Activated CD4-positive, alpha-beta memory T cell treated with anti-CD3 and anti-CD28 coated beads for 36 hours (primary cell): ENCODE measurements at regions of chr17 and their contacts with region 1.

Region 1: GRCh38 chr17:49556223-49556971 is 19.3 kb upstream of the NXPH3 start:
- DNase-seq: peak; percentile 89
- H3K4me3 Mint-ChIP-seq: no peak overlapping the region
- H3K27ac Mint-ChIP-seq: no peak overlapping the region
- H3K4me1 Mint-ChIP-seq: peaks cover 5% of the 10 kb centered on the region
- H3K27me3 Mint-ChIP-seq: peaks cover 3% of the 10 kb centered on the region

Region 2: GRCh38 chr17:49407981-49408501 is 148.4 kb before region 1 on chr17:
- CTCF ChIA-PET with region 1: interaction called, 167 read pairs
- POLR2A ChIA-PET with region 1: no interaction called
- intact Hi-C with region 1: loop called (anchors 1 kb)
- DNase-seq: peak; percentile 91
- H3K4me3 Mint-ChIP-seq: no peak overlapping the region
- H3K27ac Mint-ChIP-seq: peak overlapping the region; percentile 40
- H3K4me1 Mint-ChIP-seq: peaks cover 13% of the 10 kb centered on the region
- H3K27me3 Mint-ChIP-seq: no peaks in the 10 kb centered on the region

Region 3: DNA sequence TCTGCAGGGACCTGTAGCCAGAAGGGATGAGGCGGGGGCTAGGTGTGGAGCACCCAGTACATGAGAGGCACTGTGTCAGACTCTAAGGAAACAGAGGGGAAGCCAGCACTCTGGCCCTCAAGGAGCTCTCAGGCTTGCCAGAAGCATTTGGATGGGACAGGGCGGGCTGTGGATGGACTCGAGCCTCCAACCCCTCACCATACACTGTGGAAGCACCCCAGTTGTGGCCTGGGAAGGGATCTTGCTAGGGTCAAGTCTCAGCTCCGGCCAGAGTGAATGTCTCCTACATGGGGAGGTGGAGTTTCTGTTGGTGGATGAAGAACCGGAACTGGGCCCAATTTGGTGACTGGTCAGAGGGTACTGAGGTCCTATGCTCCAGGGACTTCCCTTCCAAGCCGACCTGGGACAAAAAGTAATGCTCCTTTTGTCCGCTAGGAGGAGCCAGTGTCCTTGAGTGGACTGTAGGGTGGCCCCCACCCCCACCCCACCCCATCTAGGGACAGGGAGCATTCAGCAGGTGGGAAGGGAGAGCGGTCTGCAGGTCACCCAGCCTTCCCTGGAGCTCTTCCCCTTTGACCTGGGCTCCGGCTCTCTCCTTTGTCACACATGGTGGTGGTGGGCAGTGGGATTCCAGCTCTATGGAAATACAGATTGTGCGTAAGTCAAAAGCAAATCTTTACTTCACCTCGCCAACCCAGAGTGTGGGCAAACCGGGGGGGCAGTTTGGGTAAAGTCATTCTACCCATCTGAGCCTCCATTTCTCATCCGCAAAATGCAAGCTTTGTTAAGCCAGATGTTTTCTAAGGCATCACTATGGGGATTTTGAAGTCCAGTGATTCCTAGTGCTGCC is 121.4 kb before region 1 on chr17:
- CTCF ChIA-PET with region 1: interaction called, 118 read pairs
- POLR2A ChIA-PET with region 1: no interaction called
- intact Hi-C with region 1: loop called (anchors 1 kb)
- DNase-seq: peak; percentile 57
- H3K4me3 Mint-ChIP-seq: no peak overlapping the region
- H3K27ac Mint-ChIP-seq: no peak overlapping the region
- H3K4me1 Mint-ChIP-seq: no peaks in the 10 kb centered on the region
- H3K27me3 Mint-ChIP-seq: peaks cover 21% of the 10 kb centered on the region

Region 4: GRCh38 chr17:49567871-49568694 is 11.7 kb after region 1 on chr17:
- CTCF ChIA-PET with region 1: interaction called, 42 read pairs
- POLR2A ChIA-PET with region 1: no interaction called
- intact Hi-C with region 1: no loop called
- DNase-seq: peak; percentile 90
- H3K4me3 Mint-ChIP-seq: peak overlapping the region; percentile 67
- H3K27ac Mint-ChIP-seq: no peak overlapping the region
- H3K4me1 Mint-ChIP-seq: peaks cover 16% of the 10 kb centered on the region
- H3K27me3 Mint-ChIP-seq: peaks cover 14% of the 10 kb centered on the region

Region 5: DNA sequence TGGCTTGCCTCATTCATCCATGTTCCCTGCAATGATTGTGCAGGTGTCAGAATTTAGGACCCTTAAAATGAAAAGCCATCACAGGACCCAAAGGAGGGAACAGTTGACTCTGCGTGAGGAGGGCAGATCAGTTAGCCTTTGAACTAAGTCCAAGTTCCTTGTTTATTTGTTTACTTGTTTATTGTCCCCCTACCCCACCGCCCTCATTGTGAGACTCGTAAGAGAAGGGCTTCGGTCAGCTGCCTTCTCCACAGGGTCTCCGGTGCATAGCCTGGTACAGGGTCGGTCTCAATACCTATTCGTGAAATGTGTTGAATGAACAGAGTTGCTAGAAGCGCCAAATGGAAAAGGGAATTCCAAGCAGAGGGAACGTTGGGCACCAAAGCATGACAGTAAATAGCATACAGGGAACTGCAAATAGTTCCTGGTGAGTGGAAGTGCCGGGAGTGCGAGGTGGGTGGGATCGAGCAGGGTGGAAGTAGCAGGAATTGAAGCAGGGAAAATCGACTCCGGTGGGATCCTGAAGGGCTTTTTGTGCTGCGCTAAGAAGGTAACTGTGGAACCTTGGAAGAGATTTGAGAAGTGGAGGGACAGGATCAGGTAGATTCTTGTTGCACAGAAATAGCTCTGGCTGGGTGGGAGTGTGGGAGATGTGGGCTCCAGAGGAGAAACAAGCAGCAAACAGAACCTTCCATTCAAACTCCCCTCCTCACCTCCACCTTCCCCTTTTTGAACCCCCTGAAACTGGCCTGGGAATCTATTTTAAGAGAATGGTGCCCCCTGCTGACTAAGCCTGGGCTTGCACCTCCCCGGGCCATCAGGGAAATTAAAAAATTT is 138.7 kb after region 1 on chr17:
- CTCF ChIA-PET with region 1: interaction called, 16 read pairs
- POLR2A ChIA-PET with region 1: no interaction called
- intact Hi-C with region 1: no loop called
- DNase-seq: peak; percentile 84
- H3K4me3 Mint-ChIP-seq: no peak overlapping the region
- H3K27ac Mint-ChIP-seq: peak overlapping the region; percentile 81
- H3K4me1 Mint-ChIP-seq: peaks cover 28% of the 10 kb centered on the region
- H3K27me3 Mint-ChIP-seq: no peaks in the 10 kb centered on the region

Region 6: DNA sequence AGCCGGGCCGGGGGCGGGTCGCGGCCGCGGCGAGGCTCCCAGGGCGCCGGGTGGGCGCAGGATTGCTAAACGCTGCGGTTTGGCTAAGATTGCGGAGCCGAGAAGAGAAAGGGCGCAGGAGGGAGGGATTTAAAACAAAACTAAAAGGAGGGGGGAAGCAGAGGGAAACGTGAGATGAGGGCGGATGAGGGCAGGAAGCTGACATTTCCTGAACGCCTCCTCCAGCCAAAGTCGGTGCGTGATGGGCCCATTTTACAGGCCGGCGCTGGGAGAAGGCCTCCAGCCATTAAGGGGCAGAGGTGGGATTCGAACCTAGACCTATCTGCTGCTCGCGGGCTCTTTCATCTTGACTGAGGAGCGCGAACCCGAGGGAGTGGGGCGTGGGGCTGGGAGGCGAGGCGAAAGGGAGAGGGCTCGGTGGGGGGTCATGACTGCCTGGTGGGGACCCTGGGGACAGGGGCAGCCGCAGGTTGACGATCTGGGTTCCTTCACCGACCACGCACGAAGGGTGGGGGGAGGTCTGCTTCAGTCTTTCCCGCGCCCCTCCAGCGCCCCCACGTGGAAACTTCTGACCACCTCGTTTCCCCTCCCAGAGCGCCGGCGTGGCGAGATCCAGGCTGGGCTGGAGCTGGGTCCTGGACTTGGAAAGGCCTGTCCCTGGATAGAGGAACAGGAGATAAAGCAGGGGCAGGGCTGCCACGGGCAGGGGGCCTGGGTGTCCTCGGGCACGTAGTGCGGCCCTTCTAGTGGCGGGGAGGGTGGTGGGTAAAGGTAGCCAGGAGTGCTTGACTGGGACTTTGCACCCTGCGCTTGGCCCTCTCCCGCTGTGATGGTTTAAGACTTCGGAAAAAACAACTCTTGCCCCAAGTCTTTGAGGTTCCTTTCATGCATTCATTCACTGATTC is 295.2 kb after region 1 on chr17:
- CTCF ChIA-PET with region 1: interaction called, 14 read pairs
- POLR2A ChIA-PET with region 1: no interaction called
- intact Hi-C with region 1: no loop called
- DNase-seq: peak; percentile 76
- H3K4me3 Mint-ChIP-seq: peak overlapping the region; percentile 76
- H3K27ac Mint-ChIP-seq: peak overlapping the region; percentile 73
- H3K4me1 Mint-ChIP-seq: peaks cover 9% of the 10 kb centered on the region
- H3K27me3 Mint-ChIP-seq: no peaks in the 10 kb centered on the region